IMR-90 (cell line): ENCODE measurements at regions of chr2 and their contacts with region 1.

Region 1: GRCh38 chr2:84362541-84362940 is 96.5 kb downstream of the SUCLG1 start:
- DNase-seq: no peak
- ATAC-seq: no peak
- H3K4me3 ChIP-seq: no peak overlapping the region
- H3K27ac ChIP-seq: no peak overlapping the region
- H3K4me1 ChIP-seq: no peaks in the 10 kb centered on the region
- H3K27me3 ChIP-seq: no peaks in the 10 kb centered on the region
- CTCF ChIP-seq: no peak
- POLR2A ChIP-seq: no peak
- RAD21 ChIP-seq: no peak

Region 2: GRCh38 chr2:83850071-83850725 is 512.3 kb before region 1 on chr2:
- CTCF ChIA-PET with region 1: no interaction called
- POLR2A ChIA-PET with region 1: no interaction called
- dilution Hi-C with region 1: no loop called
- in situ Hi-C with region 1: no loop called
- intact Hi-C with region 1: no loop called
- DNase-seq: no peak
- ATAC-seq: no peak
- H3K4me3 ChIP-seq: no peak overlapping the region
- H3K27ac ChIP-seq: no peak overlapping the region
- H3K4me1 ChIP-seq: no peaks in the 10 kb centered on the region
- H3K27me3 ChIP-seq: no peaks in the 10 kb centered on the region
- CTCF ChIP-seq: no peak
- POLR2A ChIP-seq: no peak
- RAD21 ChIP-seq: no peak

Region 3: GRCh38 chr2:84378960-84379359 is 16.4 kb after region 1 on chr2:
- CTCF ChIA-PET with region 1: no interaction called
- POLR2A ChIA-PET with region 1: no interaction called
- dilution Hi-C with region 1: no loop called
- in situ Hi-C with region 1: no loop called
- intact Hi-C with region 1: loop called (anchors 1 kb)
- DNase-seq: no peak
- ATAC-seq: no peak
- H3K4me3 ChIP-seq: no peak overlapping the region
- H3K27ac ChIP-seq: no peak overlapping the region
- H3K4me1 ChIP-seq: no peaks in the 10 kb centered on the region
- H3K27me3 ChIP-seq: no peaks in the 10 kb centered on the region
- CTCF ChIP-seq: no peak
- POLR2A ChIP-seq: no peak
- RAD21 ChIP-seq: no peak